MCF 10A (cell line): ENCODE measurements at regions of chr2 and their contacts with region 1.

Region 1: DNA sequence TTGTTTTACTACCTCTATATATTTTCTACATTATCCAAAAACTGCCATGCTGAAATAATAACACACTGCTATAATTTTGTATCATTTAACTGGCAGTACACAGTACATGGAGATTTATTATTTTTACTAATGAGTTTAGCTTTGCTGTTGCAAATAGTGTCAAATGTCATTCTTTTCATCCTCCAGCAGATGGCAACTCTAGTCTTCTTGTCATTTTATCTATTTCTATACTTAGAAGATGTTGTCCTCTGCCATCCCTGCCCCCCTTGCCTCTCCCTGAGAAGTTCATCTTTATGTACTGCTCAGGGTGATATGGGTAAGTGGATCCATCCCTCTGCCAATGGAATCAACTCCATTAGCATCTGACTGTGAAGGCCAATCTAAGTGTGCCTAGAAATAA is 21.7 kb upstream of the LRRTM1 start:
- DNase-seq: peak; percentile 53
- H3K4me3 Mint-ChIP-seq: no peak overlapping the region
- H3K27ac Mint-ChIP-seq: no peak overlapping the region
- H3K4me1 Mint-ChIP-seq: peaks cover 2% of the 10 kb centered on the region
- H3K27me3 Mint-ChIP-seq: no peaks in the 10 kb centered on the region
- CTCF ChIP-seq: peak; percentile 51

Region 2: DNA sequence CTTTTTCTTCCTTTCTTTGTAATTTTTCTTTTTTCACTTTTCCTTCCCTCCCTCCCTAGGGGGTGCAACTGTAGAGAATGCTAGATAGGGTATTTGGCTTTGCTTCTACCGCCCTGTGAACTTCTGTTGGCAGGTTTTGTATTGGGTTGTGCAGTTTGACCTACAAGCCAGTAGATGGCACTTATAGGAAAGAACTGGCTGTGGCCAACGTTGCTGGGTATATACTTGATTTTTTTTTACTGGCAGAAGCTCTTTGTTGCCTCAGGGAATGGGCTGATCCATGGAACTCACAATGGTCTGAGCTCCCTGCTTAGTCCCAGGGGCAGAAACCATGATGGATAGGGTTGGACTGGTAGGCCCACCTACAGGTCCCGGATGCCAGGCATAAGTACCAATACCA is 997.8 kb after region 1 on chr2:
- CTCF ChIA-PET with region 1: interaction called, 5 read pairs
- POLR2A ChIA-PET with region 1: no interaction called
- intact Hi-C with region 1: loop called (anchors 10 kb)
- DNase-seq: peak; percentile 39
- H3K4me3 Mint-ChIP-seq: no peak overlapping the region
- H3K27ac Mint-ChIP-seq: no peak overlapping the region
- H3K4me1 Mint-ChIP-seq: no peaks in the 10 kb centered on the region
- H3K27me3 Mint-ChIP-seq: no peaks in the 10 kb centered on the region
- CTCF ChIP-seq: peak; percentile 51